Caco-2 (cell line): ENCODE measurements at regions of chr2 and their contacts with region 1.

Region 1: GRCh38 chr2:179340668-179341067 is 76.0 kb upstream of the SESTD1 start:
- DNase-seq: peak in 1 of 2 experiments; percentile 30
- H3K4me3 ChIP-seq: no peak overlapping the region
- H3K4me3 Mint-ChIP-seq: no peak overlapping the region
- H3K27ac Mint-ChIP-seq: no peak overlapping the region
- H3K4me1 ChIP-seq: peaks cover 13% of the 10 kb centered on the region
- H3K4me1 Mint-ChIP-seq: peaks cover 14% of the 10 kb centered on the region
- H3K27me3 ChIP-seq: no peaks in the 10 kb centered on the region
- H3K27me3 Mint-ChIP-seq: no peaks in the 10 kb centered on the region
- CTCF ChIP-seq: peak; percentile 34 to 48

Region 2: GRCh38 chr2:179180242-179180641 is 160.4 kb before region 1 on chr2:
- CTCF ChIA-PET with region 1: no interaction called
- POLR2A ChIA-PET with region 1: no interaction called
- intact Hi-C with region 1: loop called (anchors 5 kb)
- DNase-seq: peak; percentile 68 to 82
- H3K4me3 ChIP-seq: no peak overlapping the region
- H3K4me3 Mint-ChIP-seq: peak overlapping the region; percentile 57
- H3K27ac Mint-ChIP-seq: peak overlapping the region; percentile 75
- H3K4me1 ChIP-seq: peaks cover 37% of the 10 kb centered on the region
- H3K4me1 Mint-ChIP-seq: peaks cover 39% of the 10 kb centered on the region
- H3K27me3 ChIP-seq: no peaks in the 10 kb centered on the region
- H3K27me3 Mint-ChIP-seq: no peaks in the 10 kb centered on the region
- CTCF ChIP-seq: no peak

Region 3: GRCh38 chr2:179311101-179311500 is 29.6 kb before region 1 on chr2:
- CTCF ChIA-PET with region 1: no interaction called
- POLR2A ChIA-PET with region 1: no interaction called
- intact Hi-C with region 1: no loop called
- DNase-seq: no peak
- H3K4me3 ChIP-seq: no peak overlapping the region
- H3K4me3 Mint-ChIP-seq: no peak overlapping the region
- H3K27ac Mint-ChIP-seq: no peak overlapping the region
- H3K4me1 ChIP-seq: 0 out of 2 replicates have a peak, but pooled peaks cover 4% of the 10 kb centered on the region
- H3K4me1 Mint-ChIP-seq: no peaks in the 10 kb centered on the region
- H3K27me3 ChIP-seq: no peaks in the 10 kb centered on the region
- H3K27me3 Mint-ChIP-seq: no peaks in the 10 kb centered on the region
- CTCF ChIP-seq: no peak